Motor neuron (in vitro differentiated cells): ENCODE measurements at regions of chr3 and their contacts with region 1.

Region 1: DNA sequence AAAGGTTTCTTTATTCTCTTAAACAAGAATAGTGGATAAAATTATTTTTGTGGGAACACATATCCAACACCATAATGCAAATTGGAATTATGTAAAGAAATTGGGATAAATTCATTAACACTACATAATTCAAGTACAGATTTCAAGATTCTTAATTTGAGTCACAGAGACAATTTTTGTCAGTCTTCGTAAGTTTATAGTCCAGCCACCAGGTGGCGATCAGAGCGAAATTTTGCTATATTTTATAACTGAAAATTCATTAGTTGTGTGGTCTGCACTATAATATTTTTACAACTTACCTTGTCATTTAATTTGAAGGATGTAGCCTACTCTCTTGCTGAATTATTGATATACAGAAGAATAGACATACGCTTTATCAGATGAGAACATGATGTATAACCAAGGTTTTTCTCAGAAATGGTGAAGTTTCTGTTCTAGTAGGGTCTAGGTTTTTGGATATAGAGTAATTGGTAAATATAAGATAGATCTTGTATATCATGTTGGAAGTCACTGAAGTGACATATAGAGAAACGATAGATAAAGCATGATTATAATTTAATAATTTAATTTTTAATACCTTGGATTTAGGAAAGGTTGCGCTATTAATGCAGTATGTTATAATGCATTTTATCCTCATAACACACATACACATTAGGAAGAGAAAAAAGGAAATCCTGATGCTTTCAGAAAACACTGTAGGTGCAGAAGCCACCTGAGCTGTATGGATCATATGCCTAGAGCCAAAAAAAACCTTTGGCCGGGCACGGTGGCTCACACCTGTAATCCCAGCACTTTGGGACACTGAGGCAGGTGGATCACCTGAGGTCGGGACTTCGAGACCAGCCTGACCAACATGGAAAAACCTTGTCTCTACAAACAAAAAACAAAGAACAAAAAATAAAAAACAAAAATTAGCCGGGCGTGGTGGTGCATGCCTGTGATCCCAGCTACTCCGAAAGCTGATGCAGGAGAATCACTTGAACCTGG is 31.7 kb downstream of the PLSCR4 start:
- ATAC-seq: no peak
- H3K4me3 ChIP-seq: no peak overlapping the region
- H3K27ac ChIP-seq: no peak overlapping the region
- H3K4me1 ChIP-seq: no peaks in the 10 kb centered on the region

Region 2: DNA sequence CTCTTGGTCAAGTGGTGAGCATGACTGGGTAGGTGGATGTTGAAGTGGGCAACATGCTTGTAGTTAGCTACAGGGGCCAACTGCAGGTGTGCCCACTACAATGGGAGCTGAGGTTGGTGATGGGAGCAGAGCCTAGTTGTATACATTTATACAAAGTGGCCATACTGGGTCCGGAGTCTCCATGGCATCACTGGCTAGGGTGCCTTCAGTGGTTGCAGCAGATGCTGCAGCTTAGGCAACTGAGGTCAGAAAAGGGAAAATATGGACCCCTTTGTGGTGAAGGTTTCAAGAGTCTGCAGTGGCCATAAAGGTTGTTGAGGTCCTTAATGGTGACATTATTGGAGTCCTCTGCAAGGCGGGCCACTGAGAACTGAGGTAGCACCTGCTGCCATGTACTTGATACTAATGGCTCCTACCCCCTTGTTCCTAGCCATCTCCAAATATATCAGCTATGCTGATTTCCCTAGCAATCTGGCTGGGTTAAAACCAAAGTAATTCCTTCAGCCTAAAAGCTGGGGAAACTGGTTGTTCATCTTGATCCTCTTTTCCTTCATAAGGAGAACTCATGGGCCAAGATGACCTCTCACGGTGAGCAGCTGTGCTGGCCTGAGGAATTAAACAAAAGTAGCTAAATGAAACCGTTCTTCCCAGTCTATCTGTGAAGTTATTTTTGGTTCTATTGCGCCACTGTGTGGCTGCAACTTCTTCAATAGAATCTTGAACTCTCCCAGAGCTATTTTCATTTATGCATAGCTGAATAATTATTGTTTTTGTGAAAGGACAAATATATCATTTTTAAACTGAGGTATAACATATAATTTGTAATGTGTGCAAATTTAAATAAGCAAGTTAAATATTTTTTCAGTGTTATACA is 107.7 kb after region 1 on chr3:
- in situ Hi-C with region 1: loop called in 3 of 9 experiments (anchors 10 kb)
- ATAC-seq: peak in 3 of 8 experiments; percentile 87 to 89 (median 89)
- H3K4me3 ChIP-seq: no peak overlapping the region
- H3K27ac ChIP-seq: no peak overlapping the region
- H3K4me1 ChIP-seq: no peaks in the 10 kb centered on the region

Region 3: GRCh38 chr3:146550743-146551510 is 331.8 kb after region 1 on chr3:
- in situ Hi-C with region 1: loop called in 1 of 9 experiments (anchors 25 kb)
- ATAC-seq: peak in 4 of 8 experiments; percentile 31 to 86 (median 75)
- H3K4me3 ChIP-seq: no peak overlapping the region
- H3K27ac ChIP-seq: no peak overlapping the region
- H3K4me1 ChIP-seq: no peaks in the 10 kb centered on the region

Region 4: DNA sequence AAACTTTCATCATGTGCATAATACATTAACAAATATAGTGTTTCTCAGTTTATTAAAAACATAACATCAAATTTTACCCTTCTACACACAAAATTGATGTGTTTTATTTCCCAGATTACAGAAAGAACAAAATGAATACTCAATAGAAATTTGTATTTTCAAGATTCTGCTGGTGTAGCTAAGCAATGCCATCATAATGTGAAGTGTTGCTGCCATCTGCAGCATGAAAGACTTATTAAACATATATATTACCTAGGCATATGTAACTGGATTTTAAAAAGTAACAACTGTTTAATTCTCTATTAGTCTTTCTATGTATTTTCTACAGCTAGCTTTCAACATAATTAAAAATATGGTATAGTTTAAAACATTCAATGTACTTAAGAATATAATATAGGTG is 358.5 kb after region 1 on chr3:
- in situ Hi-C with region 1: loop called in 5 of 9 experiments (anchors 25 kb)
- ATAC-seq: peak in 3 of 8 experiments; percentile 37 to 74 (median 71)
- H3K4me3 ChIP-seq: no peak overlapping the region
- H3K27ac ChIP-seq: no peak overlapping the region
- H3K4me1 ChIP-seq: no peaks in the 10 kb centered on the region

Region 5: GRCh38 chr3:146705205-146705604 is 486.0 kb after region 1 on chr3:
- in situ Hi-C with region 1: no loop called
- ATAC-seq: no peak
- H3K4me3 ChIP-seq: no peak overlapping the region
- H3K27ac ChIP-seq: no peak overlapping the region
- H3K4me1 ChIP-seq: no peaks in the 10 kb centered on the region